ENCODE measurements at regions of chr17 and their contacts with region 1.

Region 1: GRCh38 chr17:19648475-19649406 is at the start of gene ALDH3A2:
- DNase-seq: peak; percentile 80 to 97 (median 88)
- ATAC-seq: peak; percentile 98
- H3K4me3 ChIP-seq: peak within 1 kb of the TSS; percentile 90
- H3K4me3 Mint-ChIP-seq: peak within 1 kb of the TSS; percentile 91 to 99 (median 96)
- H3K27ac ChIP-seq: peak within 1 kb of the TSS; percentile 67
- H3K27ac Mint-ChIP-seq: peak within 1 kb of the TSS; percentile 93 to 98 (median 94)
- H3K4me1 ChIP-seq: peaks cover 0 to 6% of the 10 kb centered on the region in 2 donors
- H3K4me1 Mint-ChIP-seq: peaks cover 31 to 47% (median 39%) of the 10 kb centered on the region in 7 donors
- H3K27me3 ChIP-seq: no peaks in the 10 kb centered on the region
- H3K27me3 Mint-ChIP-seq: peaks cover 0 to 13% (median 0%) of the 10 kb centered on the region in 5 donors
- total RNA-seq, gene ALDH3A2: 26.3 to 53.4 (median 32.4) TPM

Region 2: GRCh38 chr17:19237389-19238166 is 411.2 kb before region 1 on chr17:
- CTCF ChIA-PET with region 1: no interaction called
- POLR2A ChIA-PET with region 1: no interaction called
- intact Hi-C with region 1: no loop called
- DNase-seq: peak in 8 of 9 donors; percentile 21 to 58 (median 49)
- ATAC-seq: no peak
- H3K4me3 ChIP-seq: peak overlapping the region; percentile 63
- H3K4me3 Mint-ChIP-seq: peak overlapping the region; percentile 76 to 88 (median 86)
- H3K27ac ChIP-seq: peak overlapping the region; percentile 60
- H3K27ac Mint-ChIP-seq: peak overlapping the region in 1 of 9 donors; percentile 43
- H3K4me1 ChIP-seq: no peaks in the 10 kb centered on the region
- H3K4me1 Mint-ChIP-seq: peaks cover 0 to 5% (median 3%) of the 10 kb centered on the region in 7 donors
- H3K27me3 ChIP-seq: no peaks in the 10 kb centered on the region
- H3K27me3 Mint-ChIP-seq: peaks cover 0 to 21% (median 0%) of the 10 kb centered on the region in 5 donors

Region 3: DNA sequence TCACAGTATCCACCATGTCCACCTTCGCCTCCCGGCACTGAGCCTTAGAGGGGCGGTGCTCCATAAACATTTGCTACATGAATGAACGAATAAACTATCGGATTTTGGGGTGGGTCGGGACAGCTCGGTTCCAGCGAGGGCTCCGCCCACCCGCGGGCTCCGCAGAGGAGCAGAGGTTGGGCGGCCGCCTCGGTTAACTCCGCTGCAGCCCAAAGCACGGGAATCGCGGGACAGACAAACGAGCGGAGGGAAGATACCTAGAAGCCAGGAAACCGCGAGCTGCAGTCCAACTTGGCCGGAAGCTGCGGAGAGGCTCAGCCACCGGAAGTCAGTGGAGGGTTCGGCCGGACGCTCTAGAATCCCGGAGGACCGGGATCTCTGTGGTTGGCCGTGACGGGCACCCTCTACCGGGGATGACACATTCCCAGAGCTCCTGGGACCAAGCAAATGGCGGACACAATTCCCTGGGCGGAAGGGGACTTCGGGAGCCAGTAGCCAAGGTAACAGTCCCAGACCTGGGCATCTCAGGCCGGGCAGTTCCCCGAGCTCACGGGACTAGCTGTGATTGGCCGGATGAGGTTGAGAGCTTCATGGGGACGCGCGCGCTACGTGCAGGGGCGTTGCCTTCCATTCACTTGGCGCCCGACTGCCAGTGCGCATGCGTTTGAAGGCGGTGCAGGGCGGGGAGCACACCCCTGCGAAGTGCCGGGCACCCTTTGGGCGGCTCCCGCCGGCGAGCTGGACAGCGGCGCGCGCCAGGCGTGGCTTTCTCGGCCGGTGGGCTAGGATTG is 270.9 kb before region 1 on chr17:
- CTCF ChIA-PET with region 1: no interaction called
- POLR2A ChIA-PET with region 1: interaction called, 8 read pairs
- intact Hi-C with region 1: loop called (anchors 2 to 5 kb)
- DNase-seq: peak; percentile 85 to 95 (median 92)
- ATAC-seq: peak; percentile 89
- H3K4me3 ChIP-seq: peak overlapping the region; percentile 99
- H3K4me3 Mint-ChIP-seq: peak overlapping the region; percentile 83 to 100 (median 97)
- H3K27ac ChIP-seq: peak overlapping the region; percentile 81
- H3K27ac Mint-ChIP-seq: peak overlapping the region; percentile 83 to 99 (median 97)
- H3K4me1 ChIP-seq: peaks cover 2 to 6% of the 10 kb centered on the region in 2 donors
- H3K4me1 Mint-ChIP-seq: peaks cover 6 to 29% (median 20%) of the 10 kb centered on the region in 7 donors
- H3K27me3 ChIP-seq: no peaks in the 10 kb centered on the region
- H3K27me3 Mint-ChIP-seq: no peaks in the 10 kb centered on the region

Region 4: DNA sequence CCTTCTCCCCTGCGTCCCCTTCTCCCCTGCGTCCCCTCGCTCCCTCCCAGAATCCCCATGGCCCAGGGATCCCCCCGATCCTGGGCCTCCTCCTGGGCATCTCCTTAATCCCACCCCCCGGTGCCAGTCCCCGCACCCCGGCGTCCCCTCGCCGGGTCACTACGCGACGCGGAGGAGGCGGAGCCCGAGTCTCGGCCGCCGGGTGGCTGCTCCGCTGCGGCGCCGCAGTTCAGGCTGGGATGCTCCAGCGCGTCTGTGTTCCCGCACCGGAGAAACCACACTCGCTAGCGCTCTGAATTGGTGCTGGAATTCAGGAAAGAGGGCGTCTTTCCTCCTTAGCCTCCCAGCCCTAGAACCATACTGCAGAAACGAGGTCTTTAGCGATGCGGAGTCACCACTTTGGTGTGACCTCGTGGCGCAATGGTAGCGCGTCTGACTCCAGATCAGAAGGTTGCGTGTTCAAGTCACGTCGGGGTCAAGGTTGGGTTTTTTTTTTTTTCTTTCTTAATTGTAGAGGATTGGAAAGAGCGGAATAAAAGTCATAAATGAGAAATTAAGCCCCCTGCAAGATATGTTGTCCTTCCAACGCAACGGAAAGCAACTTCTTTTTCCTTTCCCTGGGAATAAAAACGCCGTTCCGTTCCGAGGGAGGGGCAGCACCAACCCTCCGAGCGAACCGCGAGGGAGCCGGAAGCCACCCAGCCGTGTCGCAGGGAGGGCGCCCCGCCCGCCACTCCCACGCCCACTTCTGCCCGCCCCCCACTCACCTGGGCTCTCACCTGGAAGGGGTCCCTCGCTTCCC is 140.8 kb before region 1 on chr17:
- CTCF ChIA-PET with region 1: no interaction called
- POLR2A ChIA-PET with region 1: no interaction called
- intact Hi-C with region 1: loop called (anchors 1 to 2 kb)
- DNase-seq: peak; percentile 82 to 96 (median 90)
- ATAC-seq: peak; percentile 85
- H3K4me3 ChIP-seq: peak overlapping the region; percentile 99
- H3K4me3 Mint-ChIP-seq: peak overlapping the region; percentile 87 to 99 (median 91)
- H3K27ac ChIP-seq: peak overlapping the region; percentile 67
- H3K27ac Mint-ChIP-seq: peak overlapping the region; percentile 95 to 99 (median 96)
- H3K4me1 ChIP-seq: peaks cover 0 to 6% of the 10 kb centered on the region in 2 donors
- H3K4me1 Mint-ChIP-seq: peaks cover 8 to 13% (median 11%) of the 10 kb centered on the region in 7 donors
- H3K27me3 ChIP-seq: no peaks in the 10 kb centered on the region
- H3K27me3 Mint-ChIP-seq: peaks cover 0 to 24% (median 0%) of the 10 kb centered on the region in 5 donors

Region 5: DNA sequence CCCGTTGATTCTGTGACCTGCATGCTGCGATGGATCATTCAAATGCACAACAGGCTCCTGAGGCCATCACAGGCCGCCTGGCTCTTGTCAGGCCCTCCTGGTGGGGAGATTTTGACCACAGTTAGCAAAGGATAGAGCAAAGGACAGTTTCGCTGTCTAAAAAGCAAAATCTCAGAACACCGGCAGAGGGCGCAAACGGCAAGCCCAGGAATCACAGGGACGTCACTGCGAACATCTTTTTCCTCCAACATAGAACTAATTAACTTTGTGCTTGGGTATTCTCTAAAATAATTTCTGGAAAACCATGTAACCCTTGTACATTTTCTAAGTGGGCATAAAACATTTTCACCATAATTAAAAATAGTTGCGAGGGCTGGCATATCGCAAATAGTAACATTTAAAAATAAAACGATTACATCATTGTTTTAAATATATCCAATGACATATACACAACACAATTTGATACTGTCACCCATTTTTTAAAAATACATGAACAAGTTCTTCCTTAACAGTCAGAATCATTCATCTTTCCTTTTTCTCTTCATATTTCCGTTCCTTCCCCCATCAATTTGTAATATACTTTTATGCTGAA is 134.7 kb before region 1 on chr17:
- CTCF ChIA-PET with region 1: interaction called, 3 read pairs
- POLR2A ChIA-PET with region 1: no interaction called
- intact Hi-C with region 1: loop called (anchors 1 kb)
- DNase-seq: peak; percentile 46 to 71 (median 66)
- ATAC-seq: peak; percentile 82
- H3K4me3 ChIP-seq: no peak overlapping the region
- H3K4me3 Mint-ChIP-seq: no peak overlapping the region
- H3K27ac ChIP-seq: no peak overlapping the region
- H3K27ac Mint-ChIP-seq: peak overlapping the region in 3 of 9 donors; percentile 3 to 56 (median 36)
- H3K4me1 ChIP-seq: peaks cover 0 to 4% of the 10 kb centered on the region in 2 donors
- H3K4me1 Mint-ChIP-seq: peaks cover 0 to 5% (median under 1%) of the 10 kb centered on the region in 7 donors
- H3K27me3 ChIP-seq: no peaks in the 10 kb centered on the region
- H3K27me3 Mint-ChIP-seq: peaks cover 0 to 11% (median 0%) of the 10 kb centered on the region in 5 donors

Region 6: DNA sequence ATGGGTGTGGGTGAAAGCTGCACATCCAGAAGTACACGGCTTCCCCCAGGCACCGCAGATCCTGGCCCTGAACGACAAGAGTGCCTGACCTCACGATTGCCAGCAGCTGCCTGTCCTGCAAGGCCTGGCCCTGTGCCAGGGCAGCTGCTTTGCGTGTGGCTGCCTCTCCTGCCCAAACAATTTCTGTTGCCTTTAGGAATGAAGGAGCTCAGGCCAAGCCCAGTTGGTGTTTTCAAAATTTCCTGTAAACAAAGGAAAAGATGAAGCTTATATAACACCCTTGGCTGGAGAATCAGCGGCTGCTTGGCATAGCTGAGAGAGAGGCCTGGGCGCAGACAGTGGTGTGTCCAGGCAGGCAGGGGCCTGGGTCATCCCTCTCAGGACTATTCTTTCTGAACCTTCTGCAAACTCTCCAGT is 79.3 kb after region 1 on chr17:
- CTCF ChIA-PET with region 1: no interaction called
- POLR2A ChIA-PET with region 1: interaction called, 10 read pairs
- intact Hi-C with region 1: loop called in 1 of 2 experiments (anchors 5 kb)
- DNase-seq: no peak
- ATAC-seq: no peak
- H3K4me3 ChIP-seq: no peak overlapping the region
- H3K4me3 Mint-ChIP-seq: peak overlapping the region in 1 of 10 donors; percentile 26
- H3K27ac ChIP-seq: no peak overlapping the region
- H3K27ac Mint-ChIP-seq: no peak overlapping the region
- H3K4me1 ChIP-seq: peaks cover 12 to 21% of the 10 kb centered on the region in 2 donors
- H3K4me1 Mint-ChIP-seq: peaks cover 6 to 40% (median 26%) of the 10 kb centered on the region in 7 donors
- H3K27me3 ChIP-seq: no peaks in the 10 kb centered on the region
- H3K27me3 Mint-ChIP-seq: peaks cover 0 to 11% (median 0%) of the 10 kb centered on the region in 5 donors

Region 7: DNA sequence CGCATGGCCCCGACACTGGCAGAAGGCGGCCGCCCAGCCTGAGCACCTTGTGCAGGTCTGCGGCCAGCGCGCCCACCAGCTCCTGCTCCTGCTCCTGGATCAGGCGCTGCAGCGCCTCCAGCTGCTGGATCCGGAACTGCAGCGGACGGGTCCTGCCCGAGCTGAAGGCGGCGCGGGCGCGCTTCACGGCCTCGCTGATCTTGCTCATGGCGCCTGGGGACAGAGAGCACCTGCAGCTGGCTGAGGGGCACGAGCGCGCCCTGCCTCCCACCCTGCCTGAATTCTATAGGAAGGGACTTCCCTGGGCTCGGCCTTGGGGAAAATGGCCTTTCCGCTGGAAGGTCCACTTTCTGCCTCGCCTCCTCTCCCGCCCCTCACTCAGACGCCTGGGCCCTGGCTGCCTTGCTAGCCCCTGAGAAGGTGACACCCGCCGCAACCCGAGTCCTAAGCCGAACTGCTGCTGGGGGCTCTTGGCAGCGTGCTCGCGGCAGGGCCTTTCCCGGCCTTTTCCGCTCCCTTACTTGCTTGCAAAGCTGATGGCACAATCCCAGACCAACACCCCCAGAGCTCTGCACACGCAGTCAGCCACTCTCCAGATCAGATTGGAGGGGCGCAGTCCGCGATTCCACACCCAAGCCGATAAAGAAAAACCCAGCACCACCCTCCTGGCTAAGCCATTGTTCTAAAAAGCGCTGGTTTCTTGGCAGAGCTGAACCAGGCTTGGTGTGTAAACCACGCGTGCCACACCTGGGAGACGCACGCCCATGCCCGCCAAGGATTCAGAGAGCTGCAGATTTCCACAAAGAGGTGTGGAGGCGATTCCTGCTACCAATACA is 96.4 kb after region 1 on chr17:
- CTCF ChIA-PET with region 1: interaction called, 3 read pairs
- POLR2A ChIA-PET with region 1: interaction called, 12 read pairs
- intact Hi-C with region 1: no loop called
- DNase-seq: peak; percentile 73 to 91 (median 84)
- ATAC-seq: peak; percentile 95
- H3K4me3 ChIP-seq: peak overlapping the region; percentile 27
- H3K4me3 Mint-ChIP-seq: peak overlapping the region; percentile 36 to 78 (median 66)
- H3K27ac ChIP-seq: no peak overlapping the region
- H3K27ac Mint-ChIP-seq: peak overlapping the region in 2 of 9 donors; percentile 40 to 67
- H3K4me1 ChIP-seq: peaks cover 0 to 5% of the 10 kb centered on the region in 2 donors
- H3K4me1 Mint-ChIP-seq: peaks cover 0 to 10% (median 0%) of the 10 kb centered on the region in 7 donors
- H3K27me3 ChIP-seq: no peaks in the 10 kb centered on the region
- H3K27me3 Mint-ChIP-seq: peaks cover 0 to 7% (median 0%) of the 10 kb centered on the region in 5 donors

Region 8: DNA sequence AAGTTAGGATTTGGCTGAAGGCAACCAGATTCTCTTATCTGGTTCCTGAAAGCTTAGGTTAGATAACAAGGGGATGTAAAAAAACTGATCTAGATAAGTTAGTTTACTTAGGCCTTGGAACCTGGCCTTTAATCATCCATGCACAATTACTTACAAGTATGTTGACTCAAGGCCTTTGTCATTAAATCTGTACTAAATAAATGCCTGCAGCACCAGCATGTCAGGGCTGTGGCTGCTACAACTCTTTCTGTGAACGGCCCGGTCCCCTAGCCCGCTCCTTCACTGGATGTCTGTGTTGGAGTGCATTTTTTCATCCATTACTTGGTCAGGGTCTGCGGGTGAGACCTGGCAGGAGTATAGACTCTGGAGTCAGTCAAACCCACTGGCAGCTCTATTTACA is 147.7 kb after region 1 on chr17:
- CTCF ChIA-PET with region 1: no interaction called
- POLR2A ChIA-PET with region 1: no interaction called
- intact Hi-C with region 1: no loop called
- DNase-seq: no peak
- ATAC-seq: no peak
- H3K4me3 ChIP-seq: no peak overlapping the region
- H3K4me3 Mint-ChIP-seq: no peak overlapping the region
- H3K27ac ChIP-seq: no peak overlapping the region
- H3K27ac Mint-ChIP-seq: no peak overlapping the region
- H3K4me1 ChIP-seq: peaks cover 0 to 8% of the 10 kb centered on the region in 2 donors
- H3K4me1 Mint-ChIP-seq: peaks cover 7 to 17% (median 12%) of the 10 kb centered on the region in 7 donors
- H3K27me3 ChIP-seq: no peaks in the 10 kb centered on the region
- H3K27me3 Mint-ChIP-seq: no peaks in the 10 kb centered on the region

Region 9: DNA sequence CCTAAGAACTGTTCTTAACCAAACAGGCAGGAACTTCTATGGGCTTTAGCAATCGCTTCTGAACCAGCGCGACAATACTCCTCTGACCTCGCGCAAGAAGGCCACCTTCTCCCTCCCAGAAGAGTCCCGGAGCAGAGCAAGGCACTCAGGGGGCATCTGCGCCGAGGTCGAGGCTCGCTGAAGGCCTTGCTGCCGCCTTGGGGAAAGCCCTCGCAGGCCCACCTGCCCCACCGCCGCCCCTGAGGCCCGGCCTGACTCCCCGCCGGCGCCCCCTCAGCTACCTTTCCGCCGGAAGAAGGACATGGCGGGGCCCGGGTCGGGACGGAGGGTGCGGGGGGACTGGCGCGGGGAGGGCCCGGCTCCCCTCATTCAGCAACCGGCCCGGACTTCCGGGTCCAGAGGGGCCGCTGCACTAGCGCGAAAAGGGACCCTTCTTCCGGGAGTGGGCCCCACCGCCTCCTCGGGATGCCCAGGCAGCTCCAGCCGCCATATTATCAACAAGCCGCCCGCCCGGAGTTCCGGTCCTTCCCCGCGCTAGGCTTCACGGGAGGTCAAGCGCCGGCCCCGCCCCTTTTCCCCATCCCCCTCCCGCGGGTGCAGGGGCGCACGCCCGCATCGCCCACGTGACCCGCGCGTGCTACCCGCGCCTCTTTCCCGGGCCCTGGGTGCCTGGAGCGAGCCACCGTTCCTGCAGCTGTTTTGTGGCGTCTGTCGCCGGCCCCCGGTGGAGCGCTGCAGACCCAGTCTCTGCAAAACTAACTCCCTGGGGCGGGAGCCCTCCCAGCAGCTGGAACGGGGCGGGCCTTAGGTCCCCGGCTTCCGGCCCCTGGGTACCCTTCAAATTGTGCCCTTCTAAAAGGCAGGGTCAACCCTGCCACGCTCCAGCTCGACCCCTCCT is 328.8 kb after region 1 on chr17 and contains the start of gene AKAP10:
- CTCF ChIA-PET with region 1: no interaction called
- POLR2A ChIA-PET with region 1: interaction called, 7 read pairs
- intact Hi-C with region 1: loop called (anchors 2 to 5 kb)
- DNase-seq: peak; percentile 78 to 96 (median 86)
- ATAC-seq: peak; percentile 94
- H3K4me3 ChIP-seq: peak within 1 kb of the TSS; percentile 85
- H3K4me3 Mint-ChIP-seq: peak within 1 kb of the TSS; percentile 88 to 98 (median 96)
- H3K27ac ChIP-seq: peak within 1 kb of the TSS; percentile 78
- H3K27ac Mint-ChIP-seq: peak within 1 kb of the TSS; percentile 94 to 98 (median 96)
- H3K4me1 ChIP-seq: peaks cover 8 to 11% of the 10 kb centered on the region in 2 donors
- H3K4me1 Mint-ChIP-seq: peaks cover 28 to 55% (median 52%) of the 10 kb centered on the region in 7 donors
- H3K27me3 ChIP-seq: no peaks in the 10 kb centered on the region
- H3K27me3 Mint-ChIP-seq: no peaks in the 10 kb centered on the region
- total RNA-seq, gene AKAP10: 40.5 to 69.0 (median 51.0) TPM

Region 10: GRCh38 chr17:19987897-19988296 is 339.2 kb after region 1 on chr17:
- CTCF ChIA-PET with region 1: no interaction called
- POLR2A ChIA-PET with region 1: no interaction called
- intact Hi-C with region 1: no loop called
- DNase-seq: no peak
- ATAC-seq: no peak
- H3K4me3 ChIP-seq: no peak overlapping the region
- H3K4me3 Mint-ChIP-seq: no peak overlapping the region
- H3K27ac ChIP-seq: no peak overlapping the region
- H3K27ac Mint-ChIP-seq: no peak overlapping the region
- H3K4me1 ChIP-seq: no peaks in the 10 kb centered on the region
- H3K4me1 Mint-ChIP-seq: peaks cover 0 to 3% (median 0%) of the 10 kb centered on the region in 7 donors
- H3K27me3 ChIP-seq: no peaks in the 10 kb centered on the region
- H3K27me3 Mint-ChIP-seq: peaks cover 0 to 9% (median 9%) of the 10 kb centered on the region in 5 donors

Measured in naive thymus-derived CD4-positive, alpha-beta T cell (primary cell).